Naive thymus-derived CD4-positive, alpha-beta T cell (primary cell): ENCODE measurements at regions of chr10 and their contacts with region 1.

Region 1: DNA sequence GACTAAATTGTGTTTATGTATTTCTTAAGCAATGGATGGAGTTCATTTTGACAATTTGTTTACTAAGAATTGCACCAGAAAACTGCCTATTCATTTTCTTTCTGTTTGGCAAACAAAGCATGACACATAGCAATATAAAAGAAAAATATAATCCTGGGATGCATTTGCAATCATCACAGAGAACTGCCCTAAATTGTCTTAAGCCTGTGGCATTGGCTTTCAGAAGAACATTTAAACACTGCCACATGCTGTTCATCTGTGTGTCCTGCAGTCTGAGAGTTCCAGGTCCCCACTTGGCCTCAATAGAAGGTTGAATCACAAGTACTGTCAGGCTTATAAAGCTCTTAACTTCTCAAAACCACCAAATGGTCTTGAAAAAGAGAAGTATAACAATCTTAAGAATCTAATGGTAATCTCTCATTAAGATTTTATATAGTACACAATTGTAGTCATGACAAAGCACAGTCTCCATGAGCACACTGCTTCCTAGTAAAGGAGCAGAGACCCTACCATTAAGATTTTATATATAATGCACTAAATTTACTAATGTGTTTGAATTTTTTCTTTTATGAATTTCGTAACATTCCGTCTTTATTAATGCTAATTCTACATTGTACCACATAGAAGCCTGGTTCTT is 29.9 kb downstream of the RNLS start:
- DNase-seq: peak in 7 of 9 donors; percentile 26 to 59 (median 53)
- ATAC-seq: peak; percentile 89
- H3K4me3 ChIP-seq: no peak overlapping the region
- H3K4me3 Mint-ChIP-seq: no peak overlapping the region
- H3K27ac ChIP-seq: no peak overlapping the region
- H3K27ac Mint-ChIP-seq: no peak overlapping the region
- H3K4me1 ChIP-seq: no peaks in the 10 kb centered on the region
- H3K4me1 Mint-ChIP-seq: peaks cover 0 to 2% (median 0%) of the 10 kb centered on the region in 7 donors
- H3K27me3 ChIP-seq: no peaks in the 10 kb centered on the region
- H3K27me3 Mint-ChIP-seq: peaks cover 0 to 11% (median 0%) of the 10 kb centered on the region in 5 donors

Region 2: DNA sequence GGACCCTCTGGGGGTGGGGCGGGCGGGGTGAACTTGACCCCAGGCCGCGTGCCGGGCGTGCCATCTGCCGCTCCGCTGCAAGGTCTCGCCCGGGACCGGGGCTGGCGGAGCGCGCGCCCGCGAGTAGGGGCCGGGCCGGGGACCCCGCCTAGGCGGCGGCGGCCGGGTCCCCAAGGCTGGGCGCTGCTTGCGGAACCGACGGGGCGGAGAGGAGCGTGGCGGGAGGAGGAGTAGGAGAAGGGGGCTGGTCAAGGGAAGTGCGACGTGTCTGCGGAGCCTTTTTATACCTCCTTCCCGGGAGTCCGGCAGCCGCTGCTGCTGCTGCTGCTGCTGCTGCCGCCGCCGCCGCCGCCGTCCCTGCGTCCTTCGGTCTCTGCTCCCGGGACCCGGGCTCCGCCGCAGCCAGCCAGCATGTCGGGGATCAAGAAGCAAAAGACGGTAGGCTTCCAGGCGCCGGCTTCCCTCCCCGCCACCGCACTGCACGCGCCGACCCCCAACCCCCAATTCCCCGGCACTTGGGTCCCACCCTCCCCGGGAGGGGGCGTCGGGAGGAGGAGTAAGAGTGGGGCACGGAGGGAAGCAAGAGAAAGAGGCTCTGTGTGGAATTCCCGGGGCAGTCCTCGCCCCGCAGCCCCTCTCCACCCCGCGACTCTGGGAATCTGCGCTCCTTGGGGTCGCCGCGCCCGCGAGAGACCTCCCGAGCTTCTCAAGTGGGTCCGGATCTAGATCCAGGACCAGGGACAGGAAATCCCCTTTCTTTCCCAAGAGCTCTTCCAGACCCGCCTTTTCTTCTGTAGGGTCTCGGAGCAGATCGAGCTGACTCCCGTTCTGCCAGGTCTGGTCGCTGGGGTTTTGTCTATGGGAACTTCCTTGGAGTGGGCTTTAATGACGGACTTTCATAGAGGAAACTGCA is 893.4 kb before region 1 on chr10 and contains the start of gene PAPSS2:
- CTCF ChIA-PET with region 1: interaction called, 3 read pairs
- POLR2A ChIA-PET with region 1: no interaction called
- intact Hi-C with region 1: loop called (anchors 1 kb)
- DNase-seq: peak in 6 of 9 donors; percentile 2 to 38 (median 8)
- ATAC-seq: peak; percentile 57
- H3K4me3 ChIP-seq: peak within 1 kb of the TSS; percentile 42
- H3K4me3 Mint-ChIP-seq: peak within 1 kb of the TSS; percentile 72 to 89 (median 80)
- H3K27ac ChIP-seq: no peak within 1 kb of the TSS
- H3K27ac Mint-ChIP-seq: peak within 1 kb of the TSS in 1 of 9 donors; percentile 17
- H3K4me1 ChIP-seq: peaks cover 0 to 7% of the 10 kb centered on the region in 2 donors
- H3K4me1 Mint-ChIP-seq: peaks cover 7 to 14% (median 13%) of the 10 kb centered on the region in 7 donors
- H3K27me3 ChIP-seq: peaks cover 3 to 10% of the 10 kb centered on the region in 2 donors
- H3K27me3 Mint-ChIP-seq: peaks cover 42 to 55% (median 49%) of the 10 kb centered on the region in 5 donors
- total RNA-seq, gene PAPSS2: 0.21 to 1.6 (median 0.57) TPM

Region 3: GRCh38 chr10:87850742-87851205 is 702.5 kb before region 1 on chr10:
- CTCF ChIA-PET with region 1: interaction called, 37 read pairs
- POLR2A ChIA-PET with region 1: no interaction called
- intact Hi-C with region 1: loop called (anchors 1 kb)
- DNase-seq: peak in 8 of 9 donors; percentile 28 to 68 (median 54)
- ATAC-seq: peak; percentile 87
- H3K4me3 ChIP-seq: no peak overlapping the region
- H3K4me3 Mint-ChIP-seq: peak overlapping the region in 3 of 10 donors; percentile 1 to 49 (median 6)
- H3K27ac ChIP-seq: no peak overlapping the region
- H3K27ac Mint-ChIP-seq: peak overlapping the region in 1 of 9 donors; percentile 2
- H3K4me1 ChIP-seq: peaks cover 0 to 3% of the 10 kb centered on the region in 2 donors
- H3K4me1 Mint-ChIP-seq: peaks cover 6 to 23% (median 19%) of the 10 kb centered on the region in 7 donors
- H3K27me3 ChIP-seq: no peaks in the 10 kb centered on the region
- H3K27me3 Mint-ChIP-seq: peaks cover 0 to 8% (median 0%) of the 10 kb centered on the region in 5 donors

Region 4: GRCh38 chr10:87961046-87961713 is 592.1 kb before region 1 on chr10:
- CTCF ChIA-PET with region 1: no interaction called
- POLR2A ChIA-PET with region 1: no interaction called
- intact Hi-C with region 1: loop called in 1 of 2 experiments (anchors 10 kb)
- DNase-seq: no peak
- ATAC-seq: no peak
- H3K4me3 ChIP-seq: no peak overlapping the region
- H3K4me3 Mint-ChIP-seq: no peak overlapping the region
- H3K27ac ChIP-seq: no peak overlapping the region
- H3K27ac Mint-ChIP-seq: peak overlapping the region in 7 of 9 donors; percentile 14 to 73 (median 20)
- H3K4me1 ChIP-seq: no peaks in the 10 kb centered on the region
- H3K4me1 Mint-ChIP-seq: peaks cover 6 to 32% (median 13%) of the 10 kb centered on the region in 7 donors
- H3K27me3 ChIP-seq: no peaks in the 10 kb centered on the region
- H3K27me3 Mint-ChIP-seq: no peaks in the 10 kb centered on the region

Region 5: DNA sequence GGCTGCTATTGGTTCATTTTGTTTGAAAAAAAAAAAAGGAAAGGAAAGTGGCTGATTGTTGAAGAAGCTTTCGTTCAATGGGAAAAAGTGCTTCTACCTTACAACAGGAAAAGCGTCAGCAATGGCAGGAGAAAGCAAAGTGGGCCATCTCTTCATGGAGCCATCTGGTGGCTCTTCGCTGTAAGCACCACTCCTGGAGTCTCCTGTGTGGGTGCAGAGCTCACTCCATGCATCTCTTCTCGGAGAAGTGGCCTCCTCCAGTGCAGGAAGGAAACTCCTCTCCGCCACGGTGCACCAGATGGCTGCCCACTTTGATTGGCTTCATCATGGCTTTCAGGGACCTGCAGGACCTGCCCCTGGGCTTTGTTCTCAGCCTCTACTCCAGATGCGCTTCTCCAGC is 438.9 kb before region 1 on chr10:
- CTCF ChIA-PET with region 1: no interaction called
- POLR2A ChIA-PET with region 1: no interaction called
- intact Hi-C with region 1: loop called in 1 of 2 experiments (anchors 1 kb)
- DNase-seq: peak in 5 of 9 donors; percentile 11 to 48 (median 37)
- ATAC-seq: peak; percentile 74
- H3K4me3 ChIP-seq: no peak overlapping the region
- H3K4me3 Mint-ChIP-seq: peak overlapping the region in 5 of 10 donors; percentile 3 to 52 (median 32)
- H3K27ac ChIP-seq: no peak overlapping the region
- H3K27ac Mint-ChIP-seq: no peak overlapping the region
- H3K4me1 ChIP-seq: peaks cover 11 to 26% of the 10 kb centered on the region in 2 donors
- H3K4me1 Mint-ChIP-seq: peaks cover 4 to 32% (median 15%) of the 10 kb centered on the region in 7 donors
- H3K27me3 ChIP-seq: no peaks in the 10 kb centered on the region
- H3K27me3 Mint-ChIP-seq: peaks cover 0 to 12% (median 0%) of the 10 kb centered on the region in 5 donors

Region 6: DNA sequence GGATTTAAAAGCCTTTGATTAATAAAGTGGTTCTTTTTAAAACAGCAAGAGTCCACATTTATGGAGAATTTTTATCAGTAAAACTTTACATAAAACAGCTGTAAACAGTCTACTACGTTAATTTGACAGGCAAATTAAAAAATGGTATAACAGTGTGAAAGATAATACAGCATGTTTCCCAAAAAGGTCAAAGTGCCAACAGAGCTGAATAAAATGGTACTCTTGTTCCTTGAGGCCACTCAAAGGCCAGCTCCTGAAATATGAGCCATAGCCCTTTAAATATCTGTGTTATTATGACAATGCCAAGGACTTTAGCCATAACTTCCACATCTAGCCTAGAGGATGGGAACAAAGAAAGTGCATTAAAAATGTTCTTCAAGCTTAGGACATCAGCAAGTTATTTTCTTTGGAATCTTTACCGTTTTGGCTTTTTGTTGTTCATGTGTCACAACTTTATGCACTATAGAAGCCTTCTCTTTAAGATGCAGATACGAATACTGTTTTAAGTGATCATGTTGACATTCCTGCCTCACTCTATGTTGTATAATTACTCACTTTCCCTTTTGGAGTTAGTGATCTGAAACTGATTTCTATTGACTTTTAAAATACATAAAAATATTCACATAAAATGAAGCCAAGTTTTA is 135.7 kb before region 1 on chr10:
- CTCF ChIA-PET with region 1: no interaction called
- POLR2A ChIA-PET with region 1: no interaction called
- intact Hi-C with region 1: no loop called
- DNase-seq: no peak
- ATAC-seq: no peak
- H3K4me3 ChIP-seq: no peak overlapping the region
- H3K4me3 Mint-ChIP-seq: no peak overlapping the region
- H3K27ac ChIP-seq: no peak overlapping the region
- H3K27ac Mint-ChIP-seq: no peak overlapping the region
- H3K4me1 ChIP-seq: no peaks in the 10 kb centered on the region
- H3K4me1 Mint-ChIP-seq: peaks cover 0 to 3% (median 0%) of the 10 kb centered on the region in 7 donors
- H3K27me3 ChIP-seq: no peaks in the 10 kb centered on the region
- H3K27me3 Mint-ChIP-seq: no peaks in the 10 kb centered on the region

Region 7: DNA sequence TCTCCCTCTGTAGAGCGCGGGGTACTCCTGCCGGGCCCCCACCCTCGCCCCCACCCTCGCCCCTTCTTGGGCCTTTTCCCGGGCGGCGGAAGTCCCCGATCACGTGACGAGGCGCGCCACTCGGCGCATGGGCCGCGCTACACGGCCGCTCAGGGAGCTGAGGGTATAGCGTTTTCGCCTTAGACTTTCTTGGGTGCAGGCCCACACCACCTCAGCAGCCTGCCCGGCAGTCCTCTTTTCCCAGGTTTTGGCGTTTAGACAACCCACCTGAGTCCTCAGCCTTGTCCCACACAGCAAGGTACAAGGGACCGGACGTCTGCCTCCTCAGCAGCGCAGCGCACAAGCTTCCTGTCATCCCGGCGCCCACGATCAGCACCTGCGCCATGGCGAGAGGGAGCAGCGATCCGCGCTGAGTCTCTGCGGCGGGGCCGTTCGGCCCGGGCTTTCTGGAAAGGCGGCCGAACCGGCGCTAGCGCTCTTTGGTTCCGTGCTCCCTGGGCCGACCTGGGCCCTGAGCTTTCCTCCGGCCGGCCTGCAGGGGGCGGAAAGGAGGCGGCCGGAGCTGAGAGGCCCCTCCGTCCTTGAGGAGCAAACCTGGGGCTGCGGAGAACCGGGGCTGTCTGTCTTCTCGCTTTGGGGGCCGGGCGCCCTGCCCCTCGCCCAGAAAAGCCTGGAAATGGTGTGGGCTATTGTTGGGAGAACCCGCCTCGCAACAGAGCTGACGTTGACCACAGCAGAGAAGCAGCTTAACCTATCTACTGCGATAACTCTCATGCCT is 29.8 kb after region 1 on chr10 and contains the start of gene RNLS:
- CTCF ChIA-PET with region 1: no interaction called
- POLR2A ChIA-PET with region 1: no interaction called
- intact Hi-C with region 1: no loop called
- DNase-seq: peak; percentile 46 to 66 (median 62)
- ATAC-seq: peak; percentile 90
- H3K4me3 ChIP-seq: peak within 1 kb of the TSS; percentile 90
- H3K4me3 Mint-ChIP-seq: peak within 1 kb of the TSS; percentile 88 to 95 (median 90)
- H3K27ac ChIP-seq: peak within 1 kb of the TSS; percentile 80
- H3K27ac Mint-ChIP-seq: peak within 1 kb of the TSS; percentile 84 to 97 (median 91)
- H3K4me1 ChIP-seq: peaks cover 6 to 8% of the 10 kb centered on the region in 2 donors
- H3K4me1 Mint-ChIP-seq: peaks cover 8 to 16% (median 12%) of the 10 kb centered on the region in 7 donors
- H3K27me3 ChIP-seq: no peaks in the 10 kb centered on the region
- H3K27me3 Mint-ChIP-seq: peaks cover 0 to 19% (median 4%) of the 10 kb centered on the region in 5 donors
- total RNA-seq, gene RNLS: 1.5 to 3.6 (median 2.9) TPM

Region 8: DNA sequence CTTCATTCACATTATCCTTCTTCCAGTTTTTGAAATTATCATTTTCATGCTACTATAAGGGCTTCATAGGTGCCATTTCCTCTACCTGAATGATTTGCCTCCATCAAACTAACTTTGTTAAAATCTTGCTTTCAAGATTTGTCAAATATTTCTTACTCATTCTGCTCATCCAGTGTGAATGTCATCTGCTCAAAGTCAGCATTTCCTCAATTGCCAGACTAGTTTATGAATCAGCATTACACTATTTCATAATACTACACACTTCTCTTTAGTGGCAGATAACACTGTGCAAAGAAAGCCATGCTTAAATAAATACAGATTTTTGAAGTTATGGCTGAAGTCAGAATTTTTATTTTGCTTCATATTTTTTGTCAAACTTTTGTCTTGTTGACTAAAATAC is 89.7 kb after region 1 on chr10:
- CTCF ChIA-PET with region 1: no interaction called
- POLR2A ChIA-PET with region 1: no interaction called
- intact Hi-C with region 1: no loop called
- DNase-seq: no peak
- ATAC-seq: peak; percentile 69
- H3K4me3 ChIP-seq: no peak overlapping the region
- H3K4me3 Mint-ChIP-seq: no peak overlapping the region
- H3K27ac ChIP-seq: no peak overlapping the region
- H3K27ac Mint-ChIP-seq: no peak overlapping the region
- H3K4me1 ChIP-seq: no peaks in the 10 kb centered on the region
- H3K4me1 Mint-ChIP-seq: peaks cover 0 to 2% (median 0%) of the 10 kb centered on the region in 7 donors
- H3K27me3 ChIP-seq: no peaks in the 10 kb centered on the region
- H3K27me3 Mint-ChIP-seq: peaks cover 5 to 28% (median 5%) of the 10 kb centered on the region in 5 donors